Mammary epithelial cell (primary cell): ENCODE measurements at regions of chr12 and their contacts with region 1.

Region 1: DNA sequence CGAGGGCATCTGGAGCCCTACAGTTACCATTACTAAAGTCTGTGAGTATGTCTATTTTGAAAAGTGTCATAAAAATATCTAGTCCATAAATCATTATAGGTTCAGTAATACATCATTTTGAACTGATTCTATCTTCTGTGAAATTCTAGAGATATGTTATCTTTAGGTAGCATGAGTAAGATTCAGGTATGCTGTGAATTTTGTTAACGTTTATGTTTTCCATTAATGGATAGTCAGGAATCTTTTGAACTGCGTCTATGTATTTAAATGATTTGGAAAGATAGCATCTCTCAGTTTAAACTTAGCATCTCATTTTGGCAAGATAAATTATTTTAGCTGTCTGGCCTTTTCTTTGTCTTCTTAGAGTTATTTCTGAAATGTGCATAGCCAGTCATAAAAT is 8.3 kb downstream of the ALG10B start:
- DNase-seq: no peak
- H3K4me3 ChIP-seq: no peak overlapping the region
- H3K27ac ChIP-seq: no peak overlapping the region
- H3K4me1 ChIP-seq: no peaks in the 10 kb centered on the region
- H3K27me3 ChIP-seq: no peaks in the 10 kb centered on the region
- CTCF ChIP-seq: no peak

Region 2: GRCh38 chr12:38155526-38156496 is 169.1 kb before region 1 on chr12:
- CTCF ChIA-PET with region 1: no interaction called
- dilution Hi-C with region 1: no loop called
- in situ Hi-C with region 1: no loop called
- intact Hi-C with region 1: no loop called
- DNase-seq: no peak
- H3K4me3 ChIP-seq: no peak overlapping the region
- H3K27ac ChIP-seq: no peak overlapping the region
- H3K4me1 ChIP-seq: no peaks in the 10 kb centered on the region
- H3K27me3 ChIP-seq: no peaks in the 10 kb centered on the region
- CTCF ChIP-seq: no peak

Region 3: DNA sequence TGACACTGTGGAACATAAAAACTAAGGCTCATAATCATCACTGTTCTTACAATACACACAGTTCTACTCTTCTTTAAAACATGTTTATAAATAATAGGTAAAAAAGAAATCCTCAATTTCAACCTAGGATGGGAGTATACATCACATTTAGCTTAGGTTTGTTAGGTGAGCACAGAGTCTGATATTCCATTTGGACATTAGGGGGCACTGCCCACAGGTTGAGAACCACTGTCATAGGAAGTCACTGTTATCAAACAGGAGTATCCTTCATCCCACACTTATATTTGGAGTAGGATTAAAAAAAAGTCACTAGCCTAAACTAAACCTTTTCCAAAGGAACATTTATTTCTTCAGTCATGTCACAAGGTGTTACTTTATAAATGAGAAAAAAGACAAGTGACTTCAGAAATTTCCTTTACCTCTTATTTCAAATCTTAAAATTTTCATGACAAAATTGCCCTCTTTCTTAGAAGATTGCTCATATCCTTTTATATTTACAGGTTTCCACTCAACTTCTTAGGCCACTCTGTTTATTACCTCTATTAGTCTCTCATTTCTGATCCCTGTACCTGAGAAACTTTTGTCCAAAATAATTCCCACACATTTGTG is 339.9 kb after region 1 on chr12:
- CTCF ChIA-PET with region 1: no interaction called
- dilution Hi-C with region 1: no loop called
- in situ Hi-C with region 1: no loop called
- intact Hi-C with region 1: no loop called
- DNase-seq: peak; percentile 24
- H3K4me3 ChIP-seq: no peak overlapping the region
- H3K27ac ChIP-seq: no peak overlapping the region
- H3K4me1 ChIP-seq: no peaks in the 10 kb centered on the region
- H3K27me3 ChIP-seq: no peaks in the 10 kb centered on the region
- CTCF ChIP-seq: peak; percentile 63 to 73

Region 4: GRCh38 chr12:38761636-38762342 is 436.9 kb after region 1 on chr12:
- CTCF ChIA-PET with region 1: no interaction called
- dilution Hi-C with region 1: no loop called
- in situ Hi-C with region 1: no loop called
- intact Hi-C with region 1: loop called (anchors 10 kb)
- DNase-seq: peak; percentile 88
- H3K4me3 ChIP-seq: no peak overlapping the region
- H3K27ac ChIP-seq: no peak overlapping the region
- H3K4me1 ChIP-seq: peaks cover 5% of the 10 kb centered on the region
- H3K27me3 ChIP-seq: no peaks in the 10 kb centered on the region
- CTCF ChIP-seq: no peak